Head of caudate nucleus (tissue), 42 donors: ENCODE measurements at regions of chr10 and their contacts with region 1.

Region 1: DNA sequence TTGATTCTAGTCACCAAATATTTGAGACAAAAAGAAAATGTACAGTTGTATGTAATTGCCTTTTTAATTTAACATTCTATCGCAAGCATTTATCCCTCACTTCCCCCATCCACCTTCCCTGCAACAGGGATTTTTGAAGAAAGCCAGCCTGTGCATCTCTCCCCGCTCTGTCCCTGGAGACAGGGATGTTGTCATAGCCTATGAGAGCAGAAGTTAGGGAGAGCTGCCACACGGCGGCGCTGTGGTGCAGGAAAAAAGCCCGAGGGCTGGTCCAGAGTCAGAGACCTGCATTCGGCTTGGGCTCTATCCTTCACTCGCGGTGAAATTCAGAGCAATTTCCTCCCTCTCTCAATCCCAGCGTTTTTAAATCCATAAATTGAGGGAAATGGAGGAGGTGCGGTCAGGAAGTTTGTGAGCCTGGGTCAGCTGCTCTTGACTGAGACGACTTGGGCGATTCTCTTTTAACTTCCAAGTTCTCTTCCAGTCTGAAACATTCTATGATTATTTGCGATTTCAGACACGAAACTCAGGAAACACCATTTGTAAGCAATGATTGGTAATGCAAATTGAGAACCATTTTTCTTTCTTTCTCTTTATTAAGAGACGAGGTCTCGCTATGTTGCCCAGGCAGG is 17.5 kb downstream of the HKDC1 start:
- DNase-seq: peak; percentile 70 to 96 (median 91)

Region 2: DNA sequence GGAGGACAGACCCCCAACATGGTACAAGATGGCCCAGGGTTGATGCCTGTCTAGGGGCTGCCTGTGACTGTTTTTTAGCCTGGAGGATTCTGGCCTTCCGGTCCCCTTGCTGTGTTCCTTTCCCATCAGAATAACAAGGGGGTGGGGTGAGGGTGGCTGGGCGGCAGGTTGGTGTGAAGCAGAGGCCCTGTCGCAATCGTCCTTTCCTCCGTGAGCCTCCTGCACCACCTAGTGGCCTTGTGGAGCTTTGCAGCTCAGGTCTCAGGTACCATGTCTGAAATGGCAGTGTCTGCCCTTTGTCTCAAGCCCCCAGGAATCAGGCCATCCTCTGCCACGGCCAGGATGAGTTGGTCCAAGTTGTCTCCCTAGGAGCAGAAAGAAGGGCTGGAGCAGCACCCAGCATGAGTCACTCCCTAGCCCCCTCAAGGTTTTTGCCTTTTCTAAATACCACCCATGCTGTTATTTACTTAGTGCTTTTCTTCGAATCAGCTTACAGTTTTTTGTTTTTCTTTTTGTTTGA is 154.9 kb after region 1 on chr10:
- intact Hi-C with region 1: loop called (anchors 5 kb)
- DNase-seq: peak; percentile 68 to 91 (median 83)